ENCODE measurements at regions of chr17 and their contacts with region 1.

Region 1: DNA sequence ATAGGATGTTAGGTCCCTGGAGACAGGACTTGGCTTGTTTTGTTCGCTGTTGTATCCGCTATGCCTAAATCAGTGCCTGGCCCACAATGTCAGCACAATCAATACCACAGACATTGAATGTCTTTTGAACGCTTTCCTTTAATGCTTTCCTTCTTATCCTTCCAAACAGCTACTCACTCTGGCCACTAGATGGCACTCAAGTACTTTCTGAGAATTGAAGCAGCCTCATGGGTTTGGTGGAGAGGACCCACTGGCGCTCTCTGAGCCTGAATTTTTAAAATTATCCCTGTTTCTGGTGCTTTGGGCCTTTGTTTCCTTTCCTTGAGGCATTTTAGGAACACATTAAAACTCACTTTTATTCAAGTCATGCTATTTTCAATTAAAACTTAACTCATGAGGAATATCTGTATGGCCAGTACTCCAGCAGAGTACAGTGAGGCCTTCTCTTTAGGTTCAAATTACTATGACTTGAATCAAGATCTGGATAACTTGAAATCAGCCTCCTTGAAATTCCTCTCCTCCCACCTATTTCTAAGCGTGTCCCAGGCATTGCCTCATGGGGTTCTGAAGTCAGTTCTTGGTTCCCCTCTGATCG is 3.2 kb upstream of the NLRP1 start:
- DNase-seq: peak; percentile 25 to 34
- H3K4me3 ChIP-seq: no peak overlapping the region
- H3K27ac ChIP-seq: no peak overlapping the region
- H3K4me1 ChIP-seq: peaks cover 15 to 29% of the 10 kb centered on the region in 2 donors
- H3K27me3 ChIP-seq: no peaks in the 10 kb centered on the region
- CTCF ChIP-seq: peak; percentile 56 to 90 (median 87)
- POLR2A ChIP-seq: no peak

Region 2: DNA sequence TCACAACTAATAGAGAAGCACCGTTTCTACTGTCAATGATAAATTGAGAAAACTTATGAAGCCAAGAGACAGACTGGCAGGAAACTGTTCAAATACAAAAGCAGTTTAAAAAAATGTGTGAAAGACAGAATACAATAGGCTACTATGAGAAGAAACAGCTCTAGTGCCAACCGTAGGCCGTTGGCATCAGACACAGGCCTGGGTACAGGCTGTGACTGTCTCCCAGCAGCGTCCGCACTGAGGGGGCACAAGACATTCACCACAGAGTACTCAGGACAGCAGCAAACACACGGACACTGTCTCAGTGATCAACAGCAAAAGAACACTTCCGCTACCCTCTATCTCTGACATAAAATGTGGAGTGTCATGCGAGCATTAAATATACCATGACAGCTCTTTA is 140.7 kb before region 1 on chr17:
- intact Hi-C with region 1: no loop called
- DNase-seq: no peak
- H3K4me3 ChIP-seq: no peak overlapping the region
- H3K27ac ChIP-seq: no peak overlapping the region
- H3K4me1 ChIP-seq: no peaks in the 10 kb centered on the region
- H3K27me3 ChIP-seq: no peaks in the 10 kb centered on the region
- CTCF ChIP-seq: no peak
- POLR2A ChIP-seq: no peak

Region 3: GRCh38 chr17:5706577-5707216 is 119.2 kb after region 1 on chr17:
- intact Hi-C with region 1: loop called (anchors 10 kb)
- DNase-seq: peak; percentile 36 to 43
- H3K4me3 ChIP-seq: no peak overlapping the region
- H3K27ac ChIP-seq: no peak overlapping the region
- H3K4me1 ChIP-seq: no peaks in the 10 kb centered on the region
- H3K27me3 ChIP-seq: no peaks in the 10 kb centered on the region
- CTCF ChIP-seq: peak in 4 of 6 experiments; percentile 30 to 51 (median 36)
- POLR2A ChIP-seq: no peak

Region 4: GRCh38 chr17:5718726-5719125 is 131.2 kb after region 1 on chr17:
- intact Hi-C with region 1: no loop called
- DNase-seq: no peak
- H3K4me3 ChIP-seq: no peak overlapping the region
- H3K27ac ChIP-seq: no peak overlapping the region
- H3K4me1 ChIP-seq: no peaks in the 10 kb centered on the region
- H3K27me3 ChIP-seq: no peaks in the 10 kb centered on the region
- CTCF ChIP-seq: no peak
- POLR2A ChIP-seq: no peak

Region 5: DNA sequence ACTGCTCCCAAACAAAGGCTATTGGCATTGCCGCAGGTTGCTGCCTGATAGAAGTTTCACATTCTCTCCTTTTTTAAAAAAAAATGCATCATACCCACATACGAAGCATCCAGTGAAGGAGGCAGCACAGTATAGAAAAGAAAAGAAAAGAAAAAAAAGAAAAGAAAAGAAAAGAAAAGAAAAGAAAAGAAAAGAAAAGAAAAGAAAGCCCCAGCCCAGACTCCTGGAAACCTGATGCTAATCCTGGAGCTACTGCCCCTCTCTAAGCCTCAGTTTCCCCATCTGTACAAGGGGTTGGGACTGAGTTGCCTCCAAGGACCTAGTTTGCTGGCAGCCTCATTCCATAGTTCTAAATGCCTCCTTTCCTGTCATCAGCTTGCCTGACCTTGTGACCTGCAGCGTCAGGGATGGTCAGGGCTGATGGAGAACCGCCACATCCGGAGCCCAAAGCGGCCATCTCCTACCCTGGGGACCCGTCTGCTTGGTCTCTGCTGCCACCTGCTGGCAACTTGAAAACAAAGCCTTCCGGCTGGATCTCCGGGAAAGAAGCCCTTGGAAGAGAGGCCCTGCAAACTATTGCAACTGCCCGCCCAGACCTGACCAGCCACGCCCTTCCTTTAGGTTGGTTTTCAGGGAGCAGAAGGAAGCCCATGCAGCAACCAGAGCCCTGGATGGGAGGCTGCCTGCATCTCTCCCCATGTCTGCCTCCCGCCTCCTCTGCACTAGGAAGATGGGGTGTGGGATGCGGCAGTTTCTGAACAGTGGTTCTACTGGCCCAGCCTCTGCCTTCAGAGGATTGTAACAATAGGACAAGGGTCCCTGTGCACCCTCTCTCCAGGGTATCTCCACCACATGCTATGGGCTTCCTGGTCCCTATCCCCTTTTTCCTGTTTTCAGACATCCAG is 834.4 kb after region 1 on chr17:
- intact Hi-C with region 1: loop called (anchors 2 kb)
- DNase-seq: peak; percentile 62 to 75
- H3K4me3 ChIP-seq: no peak overlapping the region
- H3K27ac ChIP-seq: no peak overlapping the region
- H3K4me1 ChIP-seq: no peaks in the 10 kb centered on the region
- H3K27me3 ChIP-seq: no peaks in the 10 kb centered on the region
- CTCF ChIP-seq: peak; percentile 33 to 85 (median 71)
- POLR2A ChIP-seq: no peak

Measured in thyroid gland (tissue), 4 donors.